GM10248 (cell line): ENCODE measurements at regions of chr3 and their contacts with region 1.

Region 1: GRCh38 chr3:171181907-171182690 is 155.6 kb upstream of the SLC2A2 start:
- DNase-seq: no peak
- CTCF ChIP-seq: no peak

Region 2: GRCh38 chr3:171162986-171163723 is 18.9 kb before region 1 on chr3:
- CTCF ChIA-PET with region 1: interaction called, 10 read pairs
- POLR2A ChIA-PET with region 1: no interaction called
- DNase-seq: peak; percentile 60
- CTCF ChIP-seq: peak; percentile 74

Region 3: GRCh38 chr3:171646357-171647133 is 464.4 kb after region 1 on chr3:
- CTCF ChIA-PET with region 1: no interaction called
- POLR2A ChIA-PET with region 1: no interaction called
- DNase-seq: peak; percentile 52
- CTCF ChIP-seq: peak; percentile 56